Adrenal gland (tissue), 19 donors: ENCODE measurements at regions of chr12 and their contacts with region 1.

Region 1: DNA sequence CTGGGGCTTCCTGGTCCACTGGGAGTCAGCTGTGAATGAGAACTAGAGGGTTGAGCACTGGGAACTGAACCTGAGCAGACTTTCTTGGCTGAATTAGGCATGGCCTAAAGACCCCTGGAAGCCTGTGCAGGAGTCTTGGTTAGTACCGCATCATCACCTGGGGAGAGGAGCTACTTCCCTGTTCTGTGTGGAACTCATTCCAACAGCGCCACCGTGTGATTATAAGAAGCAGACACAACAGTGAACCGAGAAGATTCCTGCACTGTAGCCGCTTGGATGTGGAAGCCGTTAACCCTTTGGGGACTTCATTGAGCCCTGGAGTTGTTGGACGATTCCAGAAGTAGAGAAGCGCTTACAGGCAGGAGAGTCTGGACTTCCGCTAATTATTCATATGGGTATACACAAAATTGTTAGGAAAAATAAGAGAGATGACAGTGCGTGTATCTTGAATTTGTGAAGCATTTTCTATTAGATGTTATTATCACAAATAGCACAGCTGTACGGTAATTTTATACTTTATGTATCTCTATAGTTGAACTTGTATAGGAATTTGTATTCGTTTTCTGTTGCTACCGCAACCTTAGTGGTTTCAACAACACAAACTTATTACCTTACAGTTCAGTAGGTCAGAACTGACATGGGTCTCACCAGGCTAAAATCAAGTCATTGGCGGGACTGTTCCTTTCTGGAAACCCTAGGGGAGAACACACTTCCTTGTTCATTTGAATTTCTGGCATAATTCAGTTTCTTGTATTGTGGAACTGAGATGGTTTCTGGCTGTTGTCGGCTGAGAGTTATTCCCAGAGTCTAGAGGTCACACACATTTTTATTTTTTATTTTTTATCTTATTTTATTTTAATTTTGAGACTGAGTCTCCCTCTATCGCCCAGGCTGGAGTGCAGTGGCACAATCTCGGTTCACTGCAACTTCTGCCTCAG is 100.7 kb downstream of the C2CD5 start:
- DNase-seq: peak; percentile 55 to 83 (median 69)
- H3K4me3 ChIP-seq: no peak overlapping the region
- H3K27ac ChIP-seq: no peak overlapping the region
- H3K4me1 ChIP-seq: no peaks in the 10 kb centered on the region
- H3K27me3 ChIP-seq: no peaks in the 10 kb centered on the region
- CTCF ChIP-seq: peak; percentile 62 to 82 (median 78)
- POLR2A ChIP-seq: no peak

Region 2: DNA sequence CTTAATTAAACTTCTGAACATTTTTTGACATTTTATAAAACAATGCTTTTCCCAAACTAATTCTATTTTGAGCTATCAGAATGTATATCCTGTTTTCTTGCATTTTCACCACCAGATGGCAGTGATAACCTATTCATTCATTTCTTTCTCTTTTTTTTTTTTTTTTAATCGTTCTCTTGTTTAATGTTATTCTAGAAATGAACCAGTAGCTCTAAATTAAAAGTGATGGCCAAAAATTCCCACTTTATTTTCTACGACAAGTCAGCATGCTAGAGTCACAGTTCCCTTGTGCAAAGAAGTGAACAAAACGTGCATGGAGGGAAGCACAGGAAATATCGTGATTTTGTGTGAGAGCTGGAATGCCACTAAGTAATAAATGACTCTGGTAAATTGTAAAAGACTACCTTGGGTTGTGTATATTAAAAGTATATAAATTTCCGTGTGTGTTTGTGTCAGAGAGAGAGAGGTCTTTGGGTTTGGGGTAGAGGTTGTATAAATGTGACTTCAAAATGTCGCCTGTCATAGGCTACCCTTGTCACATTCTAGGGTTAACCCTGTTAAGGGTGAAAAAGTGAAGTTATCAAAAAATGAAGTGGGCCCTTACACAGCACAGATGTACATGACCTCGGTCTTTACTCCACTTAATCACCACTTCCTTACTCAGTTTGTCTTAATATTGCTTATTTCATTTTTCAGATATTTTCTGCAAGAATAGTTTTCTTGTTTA is 745.6 kb before region 1 on chr12:
- intact Hi-C with region 1: loop called in 1 of 2 experiments (anchors 10 kb)
- DNase-seq: no peak
- H3K4me3 ChIP-seq: peak overlapping the region in 1 of 4 donors; percentile 26
- H3K27ac ChIP-seq: no peak overlapping the region
- H3K4me1 ChIP-seq: no peaks in the 10 kb centered on the region
- H3K27me3 ChIP-seq: no peaks in the 10 kb centered on the region
- CTCF ChIP-seq: peak; percentile 58 to 97 (median 71)
- POLR2A ChIP-seq: no peak

Region 3: DNA sequence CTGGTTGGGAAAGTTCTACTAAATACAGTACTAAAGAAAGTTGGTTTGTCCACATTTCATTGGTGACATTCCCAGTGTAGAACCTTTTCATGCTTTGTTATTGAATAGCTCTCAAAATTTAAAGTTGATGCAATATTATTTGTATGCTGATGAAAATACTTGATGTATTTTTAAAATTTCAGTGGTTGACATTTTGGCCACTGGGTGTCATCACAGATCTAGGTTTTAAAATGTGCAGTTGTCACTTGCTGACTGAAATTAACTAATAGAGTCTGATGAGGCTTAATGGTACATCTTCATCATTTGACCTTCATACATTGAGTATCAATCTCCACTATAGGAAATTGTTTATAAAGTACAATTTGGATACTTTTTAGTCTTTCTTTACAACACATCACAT is 360.5 kb before region 1 on chr12:
- intact Hi-C with region 1: loop called in 1 of 2 experiments (anchors 5 kb)
- DNase-seq: peak in 2 of 7 donors; percentile 28 to 31
- H3K4me3 ChIP-seq: no peak overlapping the region
- H3K27ac ChIP-seq: no peak overlapping the region
- H3K4me1 ChIP-seq: no peaks in the 10 kb centered on the region
- H3K27me3 ChIP-seq: no peaks in the 10 kb centered on the region
- CTCF ChIP-seq: peak; percentile 33 to 70 (median 64)
- POLR2A ChIP-seq: no peak

Region 4: GRCh38 chr12:22100958-22101748 is 342.5 kb before region 1 on chr12:
- intact Hi-C with region 1: loop called in 1 of 2 experiments (anchors 10 kb)
- DNase-seq: peak; percentile 49 to 84 (median 54)
- H3K4me3 ChIP-seq: no peak overlapping the region
- H3K27ac ChIP-seq: no peak overlapping the region
- H3K4me1 ChIP-seq: peaks cover 0 to 3% of the 10 kb centered on the region in 2 donors
- H3K27me3 ChIP-seq: no peaks in the 10 kb centered on the region
- CTCF ChIP-seq: peak; percentile 40 to 73 (median 64)
- POLR2A ChIP-seq: no peak